ENCODE measurements at regions of chr6 and their contacts with region 1.

Region 1: DNA sequence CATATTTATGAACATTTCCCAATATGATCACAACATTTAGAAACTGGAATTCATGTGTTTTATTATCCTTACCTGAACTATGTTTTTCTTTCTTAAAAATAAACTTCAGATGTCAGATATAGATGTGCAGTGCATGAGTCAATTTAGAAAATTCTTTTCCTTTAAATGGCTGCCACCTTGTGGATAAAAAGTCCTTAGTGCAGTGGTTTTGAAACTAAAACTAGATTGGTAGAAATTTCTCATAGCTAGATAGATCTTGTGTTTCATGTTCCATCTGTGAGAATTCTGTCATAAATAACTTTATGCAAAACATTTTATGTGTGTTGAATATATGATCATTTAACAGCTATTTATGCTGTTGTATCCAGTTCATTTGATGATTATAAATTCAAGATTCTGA is 134.9 kb downstream of the KLHL32 start:
- DNase-seq: peak; percentile 57
- ATAC-seq: peak; percentile 43
- H3K4me3 ChIP-seq: no peak overlapping the region
- H3K27ac ChIP-seq: no peak overlapping the region
- H3K4me1 ChIP-seq: no peaks in the 10 kb centered on the region
- H3K27me3 ChIP-seq: peaks cover 23% of the 10 kb centered on the region
- CTCF ChIP-seq: peak; percentile 68

Region 2: DNA sequence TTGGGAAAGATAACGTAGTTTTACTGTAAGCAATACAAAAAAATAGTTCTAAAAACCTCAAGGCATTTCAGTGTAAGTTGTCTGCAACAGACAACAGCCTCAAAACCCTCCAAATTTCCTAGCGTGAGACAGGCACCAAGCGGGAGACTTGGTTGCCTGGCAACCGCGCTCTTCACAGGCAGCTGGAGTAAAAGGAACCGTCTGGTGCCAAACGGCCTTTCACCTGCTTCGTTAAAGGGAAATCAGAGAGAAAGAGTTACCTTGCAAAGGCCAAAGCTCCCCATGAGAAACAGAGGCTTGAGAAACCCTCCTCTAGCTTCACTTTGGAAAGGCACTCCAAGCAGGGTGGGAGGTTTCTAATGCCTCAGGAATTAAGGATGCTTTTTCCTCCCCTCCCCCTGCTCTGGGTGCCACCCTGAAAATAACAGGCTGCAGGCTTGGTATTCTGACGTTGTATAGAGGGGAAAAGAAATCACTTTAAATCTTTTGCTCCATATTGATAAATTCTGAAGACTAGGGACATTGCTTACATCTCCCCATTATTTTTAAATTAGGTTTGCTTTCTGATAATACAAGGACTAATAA is 667.6 kb before region 1 on chr6:
- CTCF ChIA-PET with region 1: no interaction called
- POLR2A ChIA-PET with region 1: no interaction called
- intact Hi-C with region 1: loop called (anchors 10 kb)
- DNase-seq: peak; percentile 40
- ATAC-seq: no peak
- H3K4me3 ChIP-seq: no peak overlapping the region
- H3K27ac ChIP-seq: no peak overlapping the region
- H3K4me1 ChIP-seq: 0 out of 2 replicates have a peak, but pooled peaks cover 3% of the 10 kb centered on the region
- H3K27me3 ChIP-seq: no peaks in the 10 kb centered on the region
- CTCF ChIP-seq: no peak

Region 3: DNA sequence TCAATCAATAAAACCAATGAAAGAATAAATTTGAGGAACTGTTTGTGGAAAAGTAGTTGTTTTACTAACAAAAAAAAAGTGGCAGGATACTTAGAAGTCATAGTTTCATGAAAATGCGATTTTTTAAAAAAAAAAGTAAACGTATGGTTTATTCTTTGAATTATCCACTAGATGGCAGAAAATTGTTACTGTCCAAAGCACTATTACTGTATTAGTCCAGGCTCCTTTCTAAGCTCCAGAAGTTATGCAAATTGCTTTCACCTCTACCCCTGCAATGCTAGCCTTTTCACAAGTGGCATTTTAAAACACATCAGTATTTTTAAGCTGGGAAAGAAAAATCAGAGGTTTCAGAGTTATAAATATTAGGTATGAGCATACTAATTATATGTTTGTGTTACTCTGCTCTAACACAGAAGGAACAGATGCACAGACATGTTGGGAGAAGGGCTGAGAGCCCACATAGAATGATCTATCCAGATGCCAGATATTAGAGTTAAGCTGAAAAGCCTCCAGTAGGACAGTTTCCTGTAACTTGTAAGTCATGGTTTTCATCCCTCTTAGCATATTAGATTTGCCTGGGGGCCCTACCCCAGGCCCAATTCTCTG is 432.6 kb before region 1 on chr6:
- CTCF ChIA-PET with region 1: no interaction called
- POLR2A ChIA-PET with region 1: no interaction called
- intact Hi-C with region 1: loop called (anchors 1 kb)
- DNase-seq: peak; percentile 30
- ATAC-seq: peak; percentile 46; the same call in 1 of the 2 replicates
- H3K4me3 ChIP-seq: no peak overlapping the region
- H3K27ac ChIP-seq: no peak overlapping the region
- H3K4me1 ChIP-seq: no peaks in the 10 kb centered on the region
- H3K27me3 ChIP-seq: peaks cover 8% of the 10 kb centered on the region; the same call in 1 of the 2 replicates
- CTCF ChIP-seq: peak; percentile 49

Measured in PC-3 (cell line).